Left cardiac atrium (tissue), 4 donors: ENCODE measurements at regions of chr19 and their contacts with region 1.

Region 1: DNA sequence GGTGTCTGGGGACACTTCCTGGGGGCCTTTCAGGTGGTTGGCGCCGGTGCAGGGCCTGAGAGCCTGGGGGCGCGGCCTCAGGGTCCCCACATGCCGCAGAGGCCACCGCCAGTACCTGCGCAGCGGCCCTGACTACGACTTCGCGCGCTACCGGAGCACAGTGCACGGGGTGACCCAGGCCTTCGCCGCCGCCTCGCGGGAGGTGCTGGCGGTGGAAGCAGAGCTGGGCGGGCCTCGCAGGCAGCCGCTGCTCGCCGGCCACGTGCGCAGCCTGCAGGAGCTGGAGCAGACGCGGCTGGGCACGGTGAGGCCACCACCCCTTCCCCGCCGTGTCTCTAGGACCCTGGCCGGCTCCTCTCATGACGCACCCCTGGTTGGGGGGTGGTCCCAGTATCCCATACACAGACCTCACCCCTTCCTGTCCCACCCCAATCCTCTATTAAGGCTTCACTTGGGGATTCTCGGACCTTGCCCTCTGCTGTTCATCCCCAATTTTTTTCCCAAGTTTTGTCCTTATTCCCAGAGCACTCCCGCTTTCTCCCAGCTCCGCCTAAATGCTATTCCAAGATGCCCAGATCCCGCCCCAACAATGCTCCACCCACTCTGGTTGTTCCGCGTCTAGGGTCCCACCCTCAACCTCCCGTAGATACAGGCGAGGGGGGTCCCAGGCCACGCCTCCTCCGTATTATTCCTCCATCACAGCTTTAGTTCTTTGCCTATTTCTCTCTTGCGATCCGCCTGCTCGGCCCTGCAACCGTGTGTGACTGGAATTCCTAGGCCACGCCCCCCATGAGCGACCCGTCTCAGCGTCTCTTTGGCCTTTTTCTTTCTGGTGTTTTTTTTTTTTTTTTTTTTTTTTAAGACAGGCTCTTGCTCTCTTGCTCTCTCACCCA is 1.0 kb downstream of the REX1BD start:
- DNase-seq: peak; percentile 77
- ATAC-seq: peak; percentile 71 to 72

Region 2: GRCh38 chr19:18675779-18676178 is 86.2 kb after region 1 on chr19:
- intact Hi-C with region 1: loop called (anchors 5 kb)
- DNase-seq: no peak
- ATAC-seq: no peak

Region 3: DNA sequence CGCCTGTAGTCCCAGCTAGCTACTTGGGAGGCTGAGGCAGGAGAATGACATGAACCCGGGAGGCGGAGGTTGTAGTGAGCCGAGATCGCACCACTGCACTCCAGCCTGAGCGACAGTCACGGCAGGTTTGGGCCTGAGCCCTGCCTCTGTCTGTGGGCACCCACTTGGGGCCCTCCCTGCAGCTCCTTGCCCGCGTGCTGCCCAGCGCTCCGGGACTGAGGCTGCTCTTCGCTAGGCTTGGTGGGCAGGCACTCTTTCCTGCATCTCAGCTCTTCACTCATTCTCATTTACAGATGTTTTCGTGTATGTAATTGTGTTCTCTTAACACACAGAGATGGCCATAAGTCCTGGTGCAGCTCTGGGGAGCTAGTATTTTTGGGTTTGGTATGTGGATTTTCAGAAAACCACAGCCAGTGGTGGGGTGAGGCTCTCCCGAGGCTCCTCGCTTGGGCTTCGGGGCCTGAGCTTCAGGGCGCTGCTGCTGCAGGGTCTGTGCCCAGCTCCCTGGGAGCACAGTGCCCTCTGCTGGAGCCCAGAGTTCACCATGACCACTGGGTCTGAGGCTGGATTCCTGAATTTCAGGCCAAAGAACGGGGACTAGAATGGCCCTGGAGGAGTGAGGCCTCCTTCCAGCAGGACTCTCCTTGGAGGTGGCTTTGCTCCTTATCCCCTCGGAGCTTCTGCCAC is 257.4 kb after region 1 on chr19:
- intact Hi-C with region 1: loop called in 1 of 2 experiments (anchors 5 kb)
- DNase-seq: peak; percentile 84
- ATAC-seq: peak; percentile 80 to 86

Region 4: DNA sequence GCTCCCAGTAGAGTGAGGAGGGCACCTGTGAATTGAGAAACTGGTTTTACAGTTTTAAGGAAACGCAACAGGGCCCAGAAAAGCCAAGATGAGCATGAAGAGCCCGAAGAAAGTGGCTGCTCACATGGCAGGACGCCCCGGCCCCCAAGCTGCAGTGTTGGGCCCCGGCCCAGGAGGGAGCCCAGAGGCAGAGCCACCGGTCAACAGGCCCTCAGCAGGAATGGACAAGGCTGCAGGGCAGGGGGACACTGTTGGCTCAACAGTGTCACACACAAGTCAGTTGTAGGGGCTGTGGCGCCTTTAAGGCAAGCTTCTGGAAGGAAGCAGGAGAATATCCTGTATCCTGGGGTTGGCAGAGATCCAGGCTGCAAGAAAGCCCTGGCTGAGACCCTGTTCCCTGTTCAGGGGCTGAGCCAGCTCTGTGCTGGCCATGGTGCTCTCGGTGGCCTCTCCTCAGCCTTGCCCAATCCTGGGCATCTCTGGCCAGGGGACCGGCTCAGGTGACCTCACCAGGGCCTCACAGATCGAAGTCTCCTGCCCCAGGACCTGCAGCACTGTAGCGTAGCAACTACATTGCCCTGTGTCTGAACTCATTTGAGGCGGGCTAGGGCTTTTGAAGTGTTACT is 270.2 kb after region 1 on chr19:
- intact Hi-C with region 1: no loop called
- DNase-seq: peak; percentile 67
- ATAC-seq: peak; percentile 7 to 35